Activated naive CD4-positive, alpha-beta T cell treated with anti-CD3 and anti-CD28 coated beads, Interleukin-2, amount 10 ng/mL, durations not matched to agents 7 days and 5 days (primary cell): ENCODE measurements at regions of chr15 and their contacts with region 1.

Region 1: DNA sequence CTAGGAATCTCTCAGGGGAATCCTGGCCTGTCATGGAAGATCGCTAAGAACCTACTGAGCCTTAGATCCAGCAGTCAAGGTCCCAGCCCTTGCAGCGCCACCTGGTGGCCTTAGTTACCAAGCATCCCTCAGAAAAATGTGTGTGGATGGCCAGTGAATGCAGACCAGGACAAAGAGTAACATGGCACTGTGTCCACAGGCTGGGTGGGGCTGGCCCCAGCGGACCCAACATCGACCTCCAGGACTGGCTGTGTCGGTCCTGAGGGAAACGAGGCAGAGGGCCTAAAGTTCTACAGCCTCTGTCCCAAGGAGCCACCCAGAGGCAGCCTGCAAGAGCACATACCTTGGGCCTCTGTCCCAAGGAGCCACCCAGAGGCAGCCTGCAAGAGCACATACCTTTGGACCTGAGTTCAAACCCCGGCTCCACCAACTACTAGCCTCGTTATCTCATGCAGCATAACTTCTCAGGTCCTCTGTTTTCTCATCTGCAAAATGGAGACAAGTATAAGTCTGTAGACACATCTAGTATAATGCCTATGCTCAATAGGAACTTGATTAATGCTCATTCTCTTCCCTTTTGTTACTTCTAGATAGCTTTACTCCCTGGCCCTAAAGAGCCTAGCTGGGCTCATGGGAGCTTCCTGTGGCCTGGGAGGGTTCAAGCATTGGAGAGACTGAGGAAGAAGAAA is 57.5 kb upstream of the HERC1 start:
- DNase-seq: peak; percentile 80
- H3K4me3 Mint-ChIP-seq: no peak overlapping the region
- H3K27ac Mint-ChIP-seq: peak overlapping the region; percentile 90
- H3K4me1 Mint-ChIP-seq: peaks cover 54% of the 10 kb centered on the region
- H3K27me3 Mint-ChIP-seq: no peaks in the 10 kb centered on the region

Region 2: DNA sequence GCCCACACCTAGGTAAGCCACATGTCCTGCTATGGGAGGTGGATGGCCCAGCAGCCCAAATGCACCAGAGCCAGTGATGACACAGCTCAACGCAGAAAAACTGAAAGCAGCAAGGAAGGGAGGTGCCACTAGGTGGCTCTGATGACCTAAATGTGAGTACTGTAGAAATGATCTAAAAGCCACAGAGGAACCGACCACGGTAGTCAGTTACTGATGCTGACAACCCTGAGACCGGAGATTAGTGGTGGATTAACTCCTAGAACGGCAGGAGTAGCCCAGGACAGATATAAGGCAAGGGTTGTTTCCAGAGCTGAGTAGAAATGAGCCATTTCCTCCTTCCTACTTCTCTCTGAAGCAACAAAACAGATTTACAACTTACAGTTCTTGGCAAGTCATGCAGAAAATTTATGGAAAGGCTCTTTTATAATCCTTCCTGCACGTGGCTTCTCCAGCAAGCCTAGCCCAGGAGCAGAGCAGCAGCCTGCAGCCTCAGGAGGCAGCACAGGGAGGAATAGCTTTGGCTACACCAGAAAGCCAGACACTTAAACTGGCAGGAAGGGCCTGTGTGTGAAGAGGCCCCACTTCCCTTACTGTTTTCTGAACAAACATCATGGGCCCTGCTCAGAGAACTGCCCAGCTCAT is 280.9 kb before region 1 on chr15:
- CTCF ChIA-PET with region 1: interaction called, 14 read pairs
- DNase-seq: peak; percentile 88
- H3K4me3 Mint-ChIP-seq: no peak overlapping the region
- H3K27ac Mint-ChIP-seq: peak overlapping the region; percentile 90
- H3K4me1 Mint-ChIP-seq: peaks cover 42% of the 10 kb centered on the region
- H3K27me3 Mint-ChIP-seq: no peaks in the 10 kb centered on the region

Region 3: DNA sequence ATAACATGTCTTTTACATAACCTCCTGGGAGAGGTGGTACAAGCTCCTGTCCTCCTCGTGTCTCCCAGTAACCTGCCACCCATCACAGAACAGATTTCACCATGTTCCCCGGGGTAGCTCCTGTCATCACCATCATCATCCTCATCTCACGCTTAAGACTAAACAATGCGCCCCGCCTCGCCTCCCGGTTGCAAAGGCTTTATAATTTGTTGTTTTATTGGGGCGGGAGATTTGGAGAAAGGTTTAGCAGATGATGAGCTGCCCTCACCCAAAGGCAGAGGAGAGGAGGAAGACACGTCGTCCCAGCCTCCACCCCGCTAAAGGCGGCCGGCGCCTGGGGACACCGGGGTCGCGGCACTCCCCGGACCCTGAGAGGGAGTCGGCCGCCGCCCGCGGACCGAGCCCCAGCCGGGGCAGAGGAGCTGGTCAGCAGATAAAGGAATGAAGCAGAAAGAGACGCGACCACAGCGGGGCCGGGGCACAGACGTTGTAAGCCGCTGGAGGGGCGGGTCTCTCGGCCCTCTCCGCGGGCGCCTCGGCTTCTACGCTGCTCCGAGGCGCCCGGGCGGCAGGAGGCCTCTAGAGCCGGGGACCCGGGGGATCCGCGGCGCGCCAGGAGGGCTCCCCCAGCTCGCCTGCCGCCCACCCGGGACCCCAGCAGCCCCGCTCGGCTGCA is 58.1 kb before region 1 on chr15:
- CTCF ChIA-PET with region 1: interaction called, 10 read pairs
- DNase-seq: peak; percentile 61
- H3K4me3 Mint-ChIP-seq: peak overlapping the region; percentile 97
- H3K27ac Mint-ChIP-seq: peak overlapping the region; percentile 84
- H3K4me1 Mint-ChIP-seq: peaks cover 40% of the 10 kb centered on the region
- H3K27me3 Mint-ChIP-seq: peaks cover 8% of the 10 kb centered on the region

Region 4: DNA sequence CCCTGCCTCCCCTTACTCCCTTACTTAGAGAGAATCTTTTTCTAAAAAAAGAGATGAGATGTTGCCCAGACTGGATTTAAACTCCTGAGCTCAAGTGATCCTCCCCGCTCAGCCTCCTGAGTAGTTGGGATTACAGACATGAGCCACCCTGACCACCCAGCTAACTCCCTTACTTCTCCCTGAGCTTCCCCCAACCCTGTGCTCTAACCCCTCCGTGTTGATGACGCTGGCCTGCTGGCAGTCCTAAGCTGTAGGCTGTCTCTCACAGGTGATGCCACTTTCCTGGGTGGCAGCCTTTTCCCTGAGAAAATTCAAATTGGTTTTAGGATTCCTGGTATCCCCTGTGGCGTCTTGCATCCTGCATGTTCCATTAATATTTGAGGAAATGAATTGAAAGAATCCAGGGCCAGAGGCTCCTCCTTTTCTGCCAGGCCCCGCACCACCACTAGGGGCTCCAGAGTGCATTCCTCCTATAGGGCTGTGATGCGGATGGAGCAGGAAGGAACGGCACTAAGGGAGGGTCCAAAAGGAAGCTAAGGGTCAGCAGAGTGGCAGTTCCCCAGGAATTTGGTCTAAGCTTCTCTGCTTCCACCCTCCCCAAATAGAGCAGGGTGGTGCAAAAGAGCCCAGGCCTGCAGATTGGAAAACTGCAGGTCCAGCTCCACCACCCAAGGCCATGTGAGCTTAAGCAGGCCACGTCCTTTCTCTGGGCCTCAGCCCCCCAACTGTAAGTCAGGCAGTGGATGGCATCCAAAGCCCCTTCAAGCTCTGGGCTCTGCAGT is 54.0 kb after region 1 on chr15:
- CTCF ChIA-PET with region 1: interaction called, 10 read pairs
- DNase-seq: peak; percentile 78
- H3K4me3 Mint-ChIP-seq: no peak overlapping the region
- H3K27ac Mint-ChIP-seq: no peak overlapping the region
- H3K4me1 Mint-ChIP-seq: peaks cover 5% of the 10 kb centered on the region
- H3K27me3 Mint-ChIP-seq: no peaks in the 10 kb centered on the region

Region 5: DNA sequence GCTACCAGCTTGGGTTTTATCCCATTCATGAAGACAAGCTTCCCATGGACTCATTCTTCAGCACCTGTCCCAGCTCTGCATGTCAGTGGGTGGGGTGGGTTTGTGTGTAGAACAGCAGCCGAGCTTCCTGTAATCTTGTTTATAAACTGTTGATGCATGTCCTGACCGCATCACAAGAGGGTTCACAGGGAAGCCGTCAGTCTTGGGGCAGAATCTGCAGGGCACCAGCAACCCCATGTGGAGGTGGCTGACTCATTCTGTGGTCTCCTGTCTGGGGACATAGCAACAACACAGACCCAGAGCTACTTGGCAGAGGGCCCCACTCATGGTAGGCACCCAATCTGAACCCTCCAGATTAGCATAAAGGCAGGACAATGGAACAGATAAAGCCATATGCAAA is 119.5 kb after region 1 on chr15:
- CTCF ChIA-PET with region 1: interaction called, 25 read pairs
- DNase-seq: peak; percentile 92
- H3K4me3 Mint-ChIP-seq: peak overlapping the region; percentile 18
- H3K27ac Mint-ChIP-seq: peak overlapping the region; percentile 91
- H3K4me1 Mint-ChIP-seq: peaks cover 41% of the 10 kb centered on the region
- H3K27me3 Mint-ChIP-seq: peaks cover 4% of the 10 kb centered on the region

Region 6: GRCh38 chr15:64046347-64047153 is 155.3 kb after region 1 on chr15 and contains the start of gene DAPK2:
- CTCF ChIA-PET with region 1: interaction called, 12 read pairs
- DNase-seq: peak; percentile 73
- H3K4me3 Mint-ChIP-seq: peak within 1 kb of the TSS; percentile 64
- H3K27ac Mint-ChIP-seq: peak within 1 kb of the TSS; percentile 19
- H3K4me1 Mint-ChIP-seq: peaks cover 4% of the 10 kb centered on the region
- H3K27me3 Mint-ChIP-seq: peaks cover 70% of the 10 kb centered on the region

Region 7: GRCh38 chr15:64067564-64068030 is 176.4 kb after region 1 on chr15:
- CTCF ChIA-PET with region 1: interaction called, 25 read pairs
- DNase-seq: peak; percentile 78
- H3K4me3 Mint-ChIP-seq: no peak overlapping the region
- H3K27ac Mint-ChIP-seq: no peak overlapping the region
- H3K4me1 Mint-ChIP-seq: peaks cover 15% of the 10 kb centered on the region
- H3K27me3 Mint-ChIP-seq: no peaks in the 10 kb centered on the region